OCI-LY7 (cell line): ENCODE measurements at regions of chr4 and their contacts with region 1.

Region 1: GRCh38 chr4:142539796-142540482 is 306.2 kb downstream of the INPP4B start:
- DNase-seq: no peak
- H3K4me3 ChIP-seq: no peak overlapping the region
- H3K27ac ChIP-seq: no peak overlapping the region
- H3K4me1 ChIP-seq: no peaks in the 10 kb centered on the region
- CTCF ChIP-seq: no peak

Region 2: GRCh38 chr4:143302536-143302935 is 762.6 kb after region 1 on chr4:
- CTCF ChIA-PET with region 1: no interaction called
- POLR2A ChIA-PET with region 1: interaction called, 10 read pairs
- intact Hi-C with region 1: no loop called
- DNase-seq: no peak
- H3K4me3 ChIP-seq: no peak overlapping the region
- H3K27ac ChIP-seq: no peak overlapping the region
- H3K4me1 ChIP-seq: no peaks in the 10 kb centered on the region
- CTCF ChIP-seq: no peak